Activated naive CD8-positive, alpha-beta T cell treated with anti-CD3 and anti-CD28 coated beads, Interleukin-2, amount 10 ng/mL, durations not matched to agents 7 days and 5 days (primary cell): ENCODE measurements at regions of chr19 and their contacts with region 1.

Region 1: DNA sequence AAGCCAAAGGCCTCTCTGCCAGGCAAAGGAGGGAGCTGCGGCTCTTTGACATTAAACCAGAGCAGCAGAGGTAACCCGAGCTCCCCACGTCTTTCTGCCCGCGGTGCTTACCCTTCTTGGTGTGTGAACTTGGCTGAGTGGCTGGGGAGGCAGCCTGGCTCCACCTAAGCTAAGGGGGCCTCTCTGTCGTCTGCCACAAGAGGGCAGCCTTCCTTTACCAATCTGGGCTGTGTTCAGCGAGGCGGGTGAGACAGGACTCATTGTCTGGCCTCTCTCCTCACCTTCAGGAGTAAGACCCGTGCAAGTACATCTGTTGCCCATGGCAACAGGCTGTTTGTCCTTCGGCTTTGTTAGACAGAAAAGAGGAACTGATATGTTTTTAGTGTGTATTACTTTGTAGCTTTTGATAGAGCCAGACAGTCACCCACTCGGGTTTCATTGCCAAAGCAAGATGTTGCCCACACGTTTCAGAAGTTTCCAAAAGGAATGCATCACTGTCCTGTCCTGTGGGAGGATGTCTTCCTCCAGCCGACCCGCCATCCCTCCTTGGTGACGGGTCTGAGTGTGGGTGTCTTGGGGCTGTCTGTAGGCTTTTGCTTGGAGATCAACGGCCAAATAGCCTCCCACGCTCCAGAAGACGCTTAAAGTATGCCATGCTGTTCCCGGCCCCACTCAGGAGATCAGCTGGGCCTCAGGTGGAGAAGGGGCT is 4.6 kb downstream of the POP4 start:
- DNase-seq: peak; percentile 79
- ATAC-seq: peak; percentile 62
- H3K4me3 Mint-ChIP-seq: no peak overlapping the region
- H3K27ac Mint-ChIP-seq: no peak overlapping the region
- H3K4me1 Mint-ChIP-seq: peaks cover 17% of the 10 kb centered on the region
- H3K27me3 Mint-ChIP-seq: no peaks in the 10 kb centered on the region

Region 2: GRCh38 chr19:29587518-29587986 is 23.2 kb before region 1 on chr19:
- POLR2A ChIA-PET with region 1: interaction called, 34 read pairs
- DNase-seq: peak; percentile 51
- ATAC-seq: peak; percentile 100
- H3K4me3 Mint-ChIP-seq: peak overlapping the region; percentile 25
- H3K27ac Mint-ChIP-seq: peak overlapping the region; percentile 44
- H3K4me1 Mint-ChIP-seq: peaks cover 20% of the 10 kb centered on the region
- H3K27me3 Mint-ChIP-seq: peaks cover 22% of the 10 kb centered on the region

Region 3: GRCh38 chr19:29665215-29665825 is 54.6 kb after region 1 on chr19 and contains the start of gene PLEKHF1:
- POLR2A ChIA-PET with region 1: interaction called, 72 read pairs
- DNase-seq: peak; percentile 98
- ATAC-seq: peak; percentile 81
- H3K4me3 Mint-ChIP-seq: peak within 1 kb of the TSS; percentile 89
- H3K27ac Mint-ChIP-seq: peak within 1 kb of the TSS; percentile 88
- H3K4me1 Mint-ChIP-seq: peaks cover 61% of the 10 kb centered on the region
- H3K27me3 Mint-ChIP-seq: no peaks in the 10 kb centered on the region
- total RNA-seq, gene PLEKHF1: 33.3 to 35.9 TPM

Region 4: GRCh38 chr19:29680447-29680846 is 69.7 kb after region 1 on chr19:
- POLR2A ChIA-PET with region 1: interaction called, 11 read pairs
- DNase-seq: peak; percentile 88
- ATAC-seq: peak; percentile 91
- H3K4me3 Mint-ChIP-seq: peak overlapping the region; percentile 54
- H3K27ac Mint-ChIP-seq: peak overlapping the region; percentile 84
- H3K4me1 Mint-ChIP-seq: peaks cover 36% of the 10 kb centered on the region
- H3K27me3 Mint-ChIP-seq: no peaks in the 10 kb centered on the region

Region 5: GRCh38 chr19:29714953-29715700 is 104.4 kb after region 1 on chr19 and contains the start of gene C19orf12:
- POLR2A ChIA-PET with region 1: interaction called, 96 read pairs
- DNase-seq: peak; percentile 86
- ATAC-seq: peak; percentile 69
- H3K4me3 Mint-ChIP-seq: peak within 1 kb of the TSS; percentile 93
- H3K27ac Mint-ChIP-seq: peak within 1 kb of the TSS; percentile 98
- H3K4me1 Mint-ChIP-seq: peaks cover 47% of the 10 kb centered on the region
- H3K27me3 Mint-ChIP-seq: peaks cover under 1% of the 10 kb centered on the region
- total RNA-seq, gene C19orf12: 31.8 to 38.2 TPM